HCT116 (cell line): ENCODE measurements at regions of chr12 and their contacts with region 1.

Region 1: DNA sequence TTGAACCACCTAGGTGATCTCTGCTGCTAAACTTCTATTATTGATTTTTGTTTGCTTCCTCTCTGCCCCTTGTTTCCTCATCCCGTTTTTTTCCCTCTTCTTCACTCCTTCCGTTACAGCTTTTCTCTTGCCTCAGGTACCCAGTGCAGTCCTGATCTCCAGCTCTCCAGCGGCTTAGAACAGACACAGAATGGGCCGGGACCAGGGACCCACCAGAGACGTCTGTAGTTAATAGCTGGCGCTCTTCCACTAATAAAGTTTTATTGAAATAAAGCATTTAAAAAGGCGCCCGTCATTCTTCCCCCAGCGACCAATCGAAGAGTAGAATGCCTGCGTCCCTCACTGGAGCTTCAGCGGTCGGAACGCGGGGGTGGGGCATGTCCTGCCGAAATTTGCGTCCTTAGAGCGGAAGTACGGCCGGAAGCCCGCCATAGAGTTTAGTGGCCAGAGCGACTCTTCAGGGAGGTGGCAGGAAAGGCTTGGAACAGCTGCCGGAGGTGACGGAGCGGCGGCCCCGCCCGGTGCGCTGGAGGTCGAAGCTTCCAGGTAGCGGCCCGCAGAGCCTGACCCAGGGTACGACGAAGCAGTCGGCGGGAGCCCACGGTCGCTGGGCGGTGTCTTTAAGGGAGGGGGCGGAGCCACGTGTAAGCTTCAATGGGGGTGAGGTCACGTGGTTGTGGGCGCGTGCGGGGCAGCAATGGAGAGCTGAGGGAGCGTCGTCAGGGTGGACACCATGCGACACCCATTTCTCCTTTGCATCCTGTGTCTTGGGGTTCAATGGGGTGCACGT is at the start of gene COPS7A:
- DNase-seq: peak; percentile 98
- ATAC-seq: peak; percentile 96
- H3K4me3 ChIP-seq: peak within 1 kb of the TSS; percentile 54 to 86
- H3K27ac ChIP-seq: peak within 1 kb of the TSS; percentile 91
- H3K4me1 ChIP-seq: peaks cover 5 to 26% of the 10 kb centered on the region in 2 experiments; a peak in 3 of 4 replicates
- H3K27me3 ChIP-seq: no peaks in the 10 kb centered on the region
- CTCF ChIP-seq: no peak
- POLR2A ChIP-seq: peak; percentile 29
- RAD21 ChIP-seq: no peak
- total RNA-seq, gene COPS7A: 67.8 TPM

Region 2: GRCh38 chr12:6708960-6709394 is 14.8 kb before region 1 on chr12:
- CTCF ChIA-PET with region 1: interaction called, 3 read pairs
- POLR2A ChIA-PET with region 1: interaction called, 12 read pairs
- RAD21 ChIA-PET with region 1: no interaction called
- intact Hi-C with region 1: no loop called
- DNase-seq: no peak
- ATAC-seq: peak; percentile 36; the same call in 1 of the 2 replicates
- H3K4me3 ChIP-seq: no peak overlapping the region
- H3K27ac ChIP-seq: no peak overlapping the region
- H3K4me1 ChIP-seq: peaks cover 0 to 6% of the 10 kb centered on the region in 2 experiments; a peak in 2 of 4 replicates
- H3K27me3 ChIP-seq: no peaks in the 10 kb centered on the region
- CTCF ChIP-seq: no peak
- POLR2A ChIP-seq: peak; percentile 21
- RAD21 ChIP-seq: no peak

Region 3: GRCh38 chr12:6764011-6764828 is 40.4 kb after region 1 on chr12:
- CTCF ChIA-PET with region 1: interaction called, 5 read pairs
- POLR2A ChIA-PET with region 1: interaction called, 18 read pairs
- RAD21 ChIA-PET with region 1: no interaction called
- intact Hi-C with region 1: no loop called
- DNase-seq: peak; percentile 99
- ATAC-seq: peak; percentile 80
- H3K4me3 ChIP-seq: peak overlapping the region; percentile 85 to 90
- H3K27ac ChIP-seq: peak overlapping the region; percentile 72
- H3K4me1 ChIP-seq: peaks cover 54 to 74% of the 10 kb centered on the region in 2 experiments
- H3K27me3 ChIP-seq: no peaks in the 10 kb centered on the region
- CTCF ChIP-seq: no peak
- POLR2A ChIP-seq: peak; percentile 53
- RAD21 ChIP-seq: no peak